Activated naive CD4-positive, alpha-beta T cell treated with anti-CD3 and anti-CD28 coated beads for 36 hours (primary cell): ENCODE measurements at regions of chr2 and their contacts with region 1.

Region 1: GRCh38 chr2:196263181-196263747 is 91.9 kb upstream of the STK17B start:
- DNase-seq: peak; percentile 61
- H3K4me3 Mint-ChIP-seq: peak overlapping the region; percentile 70
- H3K27ac Mint-ChIP-seq: peak overlapping the region; percentile 97
- H3K4me1 Mint-ChIP-seq: peaks cover 80% of the 10 kb centered on the region
- H3K27me3 Mint-ChIP-seq: no peaks in the 10 kb centered on the region

Region 2: GRCh38 chr2:195543902-195544894 is 719.1 kb before region 1 on chr2:
- CTCF ChIA-PET with region 1: no interaction called
- intact Hi-C with region 1: loop called (anchors 1 kb)
- DNase-seq: peak; percentile 72
- H3K4me3 Mint-ChIP-seq: peak overlapping the region; percentile 40
- H3K27ac Mint-ChIP-seq: peak overlapping the region; percentile 91
- H3K4me1 Mint-ChIP-seq: peaks cover 67% of the 10 kb centered on the region
- H3K27me3 Mint-ChIP-seq: no peaks in the 10 kb centered on the region

Region 3: GRCh38 chr2:196018037-196018436 is 245.2 kb before region 1 on chr2:
- CTCF ChIA-PET with region 1: no interaction called
- intact Hi-C with region 1: no loop called
- DNase-seq: no peak
- H3K4me3 Mint-ChIP-seq: no peak overlapping the region
- H3K27ac Mint-ChIP-seq: no peak overlapping the region
- H3K4me1 Mint-ChIP-seq: no peaks in the 10 kb centered on the region
- H3K27me3 Mint-ChIP-seq: no peaks in the 10 kb centered on the region

Region 4: GRCh38 chr2:196200557-196200956 is 62.7 kb before region 1 on chr2:
- CTCF ChIA-PET with region 1: no interaction called
- intact Hi-C with region 1: loop called (anchors 1 kb)
- DNase-seq: peak; percentile 72
- H3K4me3 Mint-ChIP-seq: no peak overlapping the region
- H3K27ac Mint-ChIP-seq: peak overlapping the region; percentile 56
- H3K4me1 Mint-ChIP-seq: peaks cover 52% of the 10 kb centered on the region
- H3K27me3 Mint-ChIP-seq: no peaks in the 10 kb centered on the region

Region 5: GRCh38 chr2:196252408-196253115 is 10.7 kb before region 1 on chr2:
- CTCF ChIA-PET with region 1: interaction called, 7 read pairs
- intact Hi-C with region 1: loop called (anchors 1 kb)
- DNase-seq: peak; percentile 42
- H3K4me3 Mint-ChIP-seq: no peak overlapping the region
- H3K27ac Mint-ChIP-seq: peak overlapping the region; percentile 82
- H3K4me1 Mint-ChIP-seq: peaks cover 81% of the 10 kb centered on the region
- H3K27me3 Mint-ChIP-seq: no peaks in the 10 kb centered on the region

Region 6: DNA sequence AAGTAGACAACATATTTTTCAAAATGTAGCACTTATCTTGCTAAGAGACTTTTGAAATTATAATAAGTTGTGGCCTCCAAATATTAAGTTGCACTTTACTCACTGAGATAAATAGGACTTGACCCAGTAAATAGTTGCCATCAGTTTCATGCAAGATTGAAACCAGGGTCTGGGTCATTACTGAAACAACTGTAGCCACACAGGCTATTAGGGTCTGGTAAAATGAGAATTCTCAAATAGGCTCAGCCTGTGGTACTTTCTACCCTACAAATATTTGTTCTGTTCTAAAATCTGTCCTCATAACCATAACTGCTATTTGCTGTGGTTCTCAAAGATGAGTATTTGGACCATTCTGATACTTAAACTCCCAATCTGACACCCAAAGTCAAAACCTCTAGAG is 23.6 kb after region 1 on chr2:
- CTCF ChIA-PET with region 1: interaction called, 4 read pairs
- intact Hi-C with region 1: loop called (anchors 1 kb)
- DNase-seq: no peak
- H3K4me3 Mint-ChIP-seq: no peak overlapping the region
- H3K27ac Mint-ChIP-seq: no peak overlapping the region
- H3K4me1 Mint-ChIP-seq: peaks cover 73% of the 10 kb centered on the region
- H3K27me3 Mint-ChIP-seq: no peaks in the 10 kb centered on the region

Region 7: DNA sequence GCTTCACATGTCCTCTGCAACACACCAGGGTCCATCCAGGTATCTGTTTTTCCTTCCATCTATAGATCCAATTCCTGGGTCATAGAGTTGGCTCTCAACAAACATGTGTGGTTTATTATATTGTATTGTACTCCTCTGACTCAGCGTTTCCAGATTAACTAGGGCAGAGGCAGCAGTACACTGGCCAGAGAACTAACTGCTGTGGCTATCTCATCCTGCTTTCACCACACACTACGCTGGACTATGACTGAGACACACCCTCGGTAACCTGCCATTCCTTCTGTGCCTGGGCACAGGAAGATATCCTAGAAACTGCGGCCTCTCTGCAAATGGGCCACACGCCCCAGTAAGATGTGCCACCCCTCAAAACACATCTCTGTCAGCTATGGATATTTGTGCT is 67.9 kb after region 1 on chr2:
- CTCF ChIA-PET with region 1: no interaction called
- intact Hi-C with region 1: no loop called
- DNase-seq: no peak
- H3K4me3 Mint-ChIP-seq: no peak overlapping the region
- H3K27ac Mint-ChIP-seq: no peak overlapping the region
- H3K4me1 Mint-ChIP-seq: peaks cover 5% of the 10 kb centered on the region
- H3K27me3 Mint-ChIP-seq: no peaks in the 10 kb centered on the region

Region 8: GRCh38 chr2:197216361-197216979 is 953.2 kb after region 1 on chr2:
- CTCF ChIA-PET with region 1: no interaction called
- intact Hi-C with region 1: loop called (anchors 10 kb)
- DNase-seq: no peak
- H3K4me3 Mint-ChIP-seq: peak overlapping the region; percentile 69
- H3K27ac Mint-ChIP-seq: peak overlapping the region; percentile 97
- H3K4me1 Mint-ChIP-seq: peaks cover 94% of the 10 kb centered on the region
- H3K27me3 Mint-ChIP-seq: no peaks in the 10 kb centered on the region